HCT116 (cell line): ENCODE measurements at regions of chr15 and their contacts with region 1.

Region 1: GRCh38 chr15:60358935-60359682 is 38.7 kb downstream of the ANXA2 start:
- DNase-seq: no peak
- ATAC-seq: no peak
- H3K4me3 ChIP-seq: no peak overlapping the region
- H3K27ac ChIP-seq: no peak overlapping the region
- H3K4me1 ChIP-seq: peaks cover 19 to 29% of the 10 kb centered on the region in 2 experiments
- H3K27me3 ChIP-seq: no peaks in the 10 kb centered on the region
- CTCF ChIP-seq: no peak
- POLR2A ChIP-seq: no peak
- RAD21 ChIP-seq: no peak

Region 2: GRCh38 chr15:59941612-59942011 is 417.5 kb before region 1 on chr15:
- CTCF ChIA-PET with region 1: no interaction called
- POLR2A ChIA-PET with region 1: no interaction called
- RAD21 ChIA-PET with region 1: no interaction called
- intact Hi-C with region 1: no loop called
- DNase-seq: no peak
- ATAC-seq: no peak
- H3K4me3 ChIP-seq: no peak overlapping the region
- H3K27ac ChIP-seq: no peak overlapping the region
- H3K4me1 ChIP-seq: no peaks in the 10 kb centered on the region
- H3K27me3 ChIP-seq: peaks cover 50% of the 10 kb centered on the region
- CTCF ChIP-seq: no peak
- POLR2A ChIP-seq: no peak
- RAD21 ChIP-seq: no peak

Region 3: DNA sequence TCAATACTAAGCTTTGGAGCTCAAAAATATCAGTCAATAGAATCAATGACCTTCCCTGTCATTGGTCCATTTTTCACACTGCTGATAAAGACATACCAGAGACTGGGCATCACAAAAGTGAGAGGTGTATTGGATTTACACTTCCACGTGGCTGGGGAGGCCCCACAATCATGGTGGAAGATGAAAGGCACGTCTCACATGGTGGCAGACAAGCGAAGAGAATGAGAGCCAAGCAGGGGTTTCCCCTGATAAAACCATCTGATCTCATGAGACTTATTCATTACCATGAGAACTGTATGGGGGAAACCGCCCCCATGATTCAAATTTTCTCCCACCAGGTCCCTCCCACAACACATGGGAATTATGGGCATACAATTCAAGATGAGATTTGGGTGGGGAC is 43.2 kb before region 1 on chr15:
- CTCF ChIA-PET with region 1: no interaction called
- POLR2A ChIA-PET with region 1: no interaction called
- RAD21 ChIA-PET with region 1: no interaction called
- intact Hi-C with region 1: no loop called
- DNase-seq: no peak
- ATAC-seq: no peak
- H3K4me3 ChIP-seq: no peak overlapping the region
- H3K27ac ChIP-seq: no peak overlapping the region
- H3K4me1 ChIP-seq: peaks cover 0 to 4% of the 10 kb centered on the region in 2 experiments; a peak in 1 of 4 replicates
- H3K27me3 ChIP-seq: no peaks in the 10 kb centered on the region; the same call in 1 of the 2 replicates
- CTCF ChIP-seq: no peak
- POLR2A ChIP-seq: no peak
- RAD21 ChIP-seq: no peak

Region 4: DNA sequence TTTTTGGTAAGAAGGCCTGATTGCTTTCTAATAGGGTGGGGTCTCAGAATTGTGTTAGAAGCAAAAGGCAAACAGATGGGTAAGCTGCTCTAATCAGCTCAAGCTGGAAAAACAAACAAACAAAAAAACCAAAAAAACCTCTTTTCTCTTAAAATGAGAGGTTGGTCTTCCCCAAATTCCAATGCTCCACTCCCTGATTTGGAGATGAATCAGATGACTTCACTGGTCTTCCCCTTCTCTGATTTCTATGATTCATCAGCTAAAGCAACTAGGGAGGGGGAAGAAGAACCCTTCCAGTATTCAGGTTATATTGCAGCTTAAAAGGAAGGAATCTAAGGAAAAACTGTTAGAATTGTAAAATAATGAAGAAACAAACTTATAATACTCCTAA is 48.3 kb after region 1 on chr15:
- CTCF ChIA-PET with region 1: no interaction called
- POLR2A ChIA-PET with region 1: no interaction called
- RAD21 ChIA-PET with region 1: no interaction called
- intact Hi-C with region 1: no loop called
- DNase-seq: no peak
- ATAC-seq: peak; percentile 80
- H3K4me3 ChIP-seq: peak overlapping the region in 1 of 2 experiments; percentile 6; a peak in 2 of 4 replicates
- H3K27ac ChIP-seq: peak overlapping the region; percentile 37; the same call in 1 of the 2 replicates
- H3K4me1 ChIP-seq: peaks cover 31 to 38% of the 10 kb centered on the region in 2 experiments
- H3K27me3 ChIP-seq: no peaks in the 10 kb centered on the region
- CTCF ChIP-seq: no peak
- POLR2A ChIP-seq: no peak
- RAD21 ChIP-seq: no peak

Region 5: DNA sequence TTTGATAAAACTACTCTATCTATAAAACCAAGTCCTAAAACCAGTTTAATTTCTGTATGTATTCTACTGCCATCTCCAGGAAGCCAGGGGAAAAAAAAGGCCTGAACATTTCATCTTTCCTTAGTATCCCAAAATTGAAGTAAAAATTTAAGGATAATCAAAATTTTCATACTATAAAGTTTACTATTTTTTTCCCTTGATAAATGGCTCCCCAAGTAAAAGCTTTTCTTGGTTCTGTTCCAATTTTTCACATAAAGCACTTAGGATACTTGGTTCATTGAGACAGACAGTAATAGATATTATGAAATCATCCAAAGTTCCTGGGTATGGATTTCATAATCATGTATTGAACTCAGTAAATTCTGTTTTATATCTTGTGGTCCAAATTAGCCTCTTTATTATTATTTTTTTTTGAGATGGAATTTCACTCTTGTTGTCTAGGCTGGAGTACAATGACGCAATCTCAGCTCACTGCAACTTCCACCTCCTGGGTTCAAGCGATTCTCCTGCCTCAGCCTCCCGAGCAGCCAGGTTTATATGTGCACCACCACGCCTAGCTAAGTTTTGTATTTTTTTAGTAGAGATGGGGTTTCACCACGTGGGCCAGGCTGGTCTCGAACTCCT is 85.3 kb after region 1 on chr15:
- CTCF ChIA-PET with region 1: interaction called, 5 read pairs
- POLR2A ChIA-PET with region 1: no interaction called
- RAD21 ChIA-PET with region 1: interaction called in 1 of 2 experiments, 5 read pairs
- intact Hi-C with region 1: loop called (anchors 2 kb)
- DNase-seq: no peak
- ATAC-seq: no peak
- H3K4me3 ChIP-seq: no peak overlapping the region
- H3K27ac ChIP-seq: no peak overlapping the region
- H3K4me1 ChIP-seq: no peaks in the 10 kb centered on the region
- H3K27me3 ChIP-seq: no peaks in the 10 kb centered on the region
- CTCF ChIP-seq: peak; percentile 47 to 51 (median 49); a peak in 4 of 6 replicates
- POLR2A ChIP-seq: no peak
- RAD21 ChIP-seq: peak; percentile 69

Region 6: GRCh38 chr15:60507596-60508424 is 148.7 kb after region 1 on chr15:
- CTCF ChIA-PET with region 1: no interaction called
- POLR2A ChIA-PET with region 1: no interaction called
- RAD21 ChIA-PET with region 1: no interaction called
- intact Hi-C with region 1: loop called (anchors 5 kb)
- DNase-seq: peak; percentile 54
- ATAC-seq: peak; percentile 87
- H3K4me3 ChIP-seq: no peak overlapping the region
- H3K27ac ChIP-seq: no peak overlapping the region
- H3K4me1 ChIP-seq: peaks cover 0 to 7% of the 10 kb centered on the region in 2 experiments; a peak in 2 of 4 replicates
- H3K27me3 ChIP-seq: no peaks in the 10 kb centered on the region
- CTCF ChIP-seq: peak; percentile 34 to 96 (median 89); a peak in 5 of 6 replicates
- POLR2A ChIP-seq: no peak
- RAD21 ChIP-seq: peak; percentile 60

Region 7: GRCh38 chr15:60682115-60682514 is 323.0 kb after region 1 on chr15:
- CTCF ChIA-PET with region 1: no interaction called
- POLR2A ChIA-PET with region 1: no interaction called
- RAD21 ChIA-PET with region 1: no interaction called
- intact Hi-C with region 1: no loop called
- DNase-seq: no peak
- ATAC-seq: no peak
- H3K4me3 ChIP-seq: no peak overlapping the region
- H3K27ac ChIP-seq: no peak overlapping the region
- H3K4me1 ChIP-seq: no peaks in the 10 kb centered on the region
- H3K27me3 ChIP-seq: peaks cover 74% of the 10 kb centered on the region
- CTCF ChIP-seq: no peak
- POLR2A ChIP-seq: no peak
- RAD21 ChIP-seq: no peak